HepG2 (cell line): ENCODE measurements at regions of chr7 and their contacts with region 1.

Region 1: DNA sequence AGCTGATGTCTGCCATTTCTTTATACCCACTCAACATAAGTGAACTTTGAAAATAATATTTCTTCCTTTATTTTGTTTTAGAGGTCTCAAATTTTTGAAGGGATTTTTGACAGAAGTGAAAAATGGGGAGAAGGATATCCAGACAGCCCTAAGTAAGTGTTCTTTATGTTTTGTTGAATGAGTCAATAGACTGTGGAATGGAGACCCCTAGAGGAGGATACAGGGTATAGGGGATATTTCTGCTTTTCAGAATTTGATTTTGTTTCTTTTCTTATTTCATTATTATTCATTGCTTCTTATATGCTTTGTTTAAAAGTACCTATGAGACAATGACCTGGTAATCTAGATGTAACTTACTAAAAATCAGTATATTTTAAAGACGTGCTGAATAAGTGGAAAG is 34.4 kb downstream of the PLEKHA8 start:
- DNase-seq: peak; percentile 44
- ATAC-seq: peak; percentile 61
- H3K4me3 ChIP-seq: no peak overlapping the region
- H3K27ac ChIP-seq: no peak overlapping the region
- H3K4me1 ChIP-seq: no peaks in the 10 kb centered on the region
- H3K27me3 ChIP-seq: no peaks in the 10 kb centered on the region
- CTCF ChIP-seq: peak; percentile 56
- EP300 ChIP-seq: no peak
- POLR2A ChIP-seq: no peak
- RAD21 ChIP-seq: no peak

Region 2: DNA sequence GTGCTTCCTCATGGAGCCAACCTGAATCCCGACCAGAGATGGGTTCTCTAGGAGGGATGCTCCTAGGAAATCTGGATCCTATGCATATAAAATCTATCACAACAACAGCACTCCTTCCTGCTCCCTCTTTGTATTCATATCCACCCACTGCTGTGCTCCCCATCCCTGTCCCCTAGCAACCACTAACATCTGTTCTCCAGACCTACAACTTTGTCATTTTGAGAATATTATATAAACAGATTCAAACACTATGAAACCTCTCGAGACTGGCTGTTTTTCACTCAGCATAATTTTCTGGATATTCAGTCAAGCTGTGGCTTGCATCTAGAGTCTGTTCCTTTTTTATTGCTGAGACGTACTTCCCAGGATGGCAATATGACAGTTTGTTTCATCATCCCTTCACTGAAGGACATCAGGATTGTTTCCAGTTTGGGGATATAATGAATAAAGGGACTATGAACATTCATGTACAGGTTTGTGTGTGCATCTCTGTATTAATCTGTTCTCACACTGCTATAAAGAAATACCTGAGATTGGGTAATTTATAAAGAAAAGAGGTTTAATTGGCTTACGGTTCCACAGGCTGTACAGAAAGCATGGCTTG is 535.0 kb before region 1 on chr7:
- CTCF ChIA-PET with region 1: no interaction called
- POLR2A ChIA-PET with region 1: no interaction called
- in situ Hi-C with region 1: no loop called
- intact Hi-C with region 1: no loop called
- DNase-seq: no peak
- ATAC-seq: no peak
- H3K4me3 ChIP-seq: no peak overlapping the region
- H3K27ac ChIP-seq: no peak overlapping the region
- H3K4me1 ChIP-seq: peaks cover 12% of the 10 kb centered on the region
- H3K27me3 ChIP-seq: no peaks in the 10 kb centered on the region
- CTCF ChIP-seq: no peak
- EP300 ChIP-seq: no peak
- POLR2A ChIP-seq: no peak
- RAD21 ChIP-seq: no peak

Region 3: DNA sequence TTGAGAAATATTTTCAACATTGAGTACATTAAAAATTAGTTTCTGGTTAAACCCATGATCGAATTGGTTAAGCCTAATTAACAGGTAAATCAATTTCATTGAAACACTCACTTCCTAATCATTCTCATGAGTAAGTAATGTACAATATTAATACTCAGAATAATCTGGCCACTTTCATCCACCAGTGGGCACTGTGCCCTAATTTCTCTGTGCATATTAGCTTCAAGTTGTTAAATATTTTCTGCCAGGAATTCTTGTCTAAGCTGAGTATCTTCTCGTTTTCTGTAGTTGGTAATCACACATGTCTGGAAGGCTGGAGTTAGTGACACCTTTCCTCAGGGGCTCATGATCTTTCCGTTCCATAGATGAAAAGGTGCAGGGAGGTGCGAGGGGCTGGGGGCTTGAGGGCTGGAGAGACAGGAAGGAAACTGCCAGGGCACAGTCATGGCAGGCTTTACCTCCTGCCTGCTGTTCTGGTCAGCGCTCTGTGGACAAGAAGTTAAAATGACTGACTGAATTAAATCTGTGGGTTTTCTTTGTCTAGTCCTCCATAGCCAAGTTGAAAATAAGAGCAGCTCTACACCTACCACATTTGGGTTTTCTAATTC is 184.4 kb before region 1 on chr7:
- CTCF ChIA-PET with region 1: interaction called, 8 read pairs
- POLR2A ChIA-PET with region 1: no interaction called
- in situ Hi-C with region 1: loop called (anchors 10 kb)
- intact Hi-C with region 1: loop called (anchors 2 kb)
- DNase-seq: peak; percentile 20
- ATAC-seq: peak; percentile 57; the same call in 2 of the 3 replicates
- H3K4me3 ChIP-seq: no peak overlapping the region
- H3K27ac ChIP-seq: no peak overlapping the region
- H3K4me1 ChIP-seq: peaks cover 8% of the 10 kb centered on the region; the same call in 1 of the 2 replicates
- H3K27me3 ChIP-seq: peaks cover 0 to 9% of the 10 kb centered on the region in 2 experiments; a peak in 3 of 5 replicates
- CTCF ChIP-seq: peak; percentile 39
- EP300 ChIP-seq: no peak
- POLR2A ChIP-seq: no peak
- RAD21 ChIP-seq: no peak

Region 4: GRCh38 chr7:29946428-29947186 is 116.0 kb before region 1 on chr7:
- CTCF ChIA-PET with region 1: no interaction called
- POLR2A ChIA-PET with region 1: no interaction called
- in situ Hi-C with region 1: no loop called
- intact Hi-C with region 1: loop called (anchors 1 kb)
- DNase-seq: peak; percentile 19
- ATAC-seq: peak; percentile 76
- H3K4me3 ChIP-seq: no peak overlapping the region
- H3K27ac ChIP-seq: no peak overlapping the region
- H3K4me1 ChIP-seq: no peaks in the 10 kb centered on the region
- H3K27me3 ChIP-seq: no peaks in the 10 kb centered on the region
- CTCF ChIP-seq: peak; percentile 52
- EP300 ChIP-seq: no peak
- POLR2A ChIP-seq: no peak
- RAD21 ChIP-seq: no peak

Region 5: DNA sequence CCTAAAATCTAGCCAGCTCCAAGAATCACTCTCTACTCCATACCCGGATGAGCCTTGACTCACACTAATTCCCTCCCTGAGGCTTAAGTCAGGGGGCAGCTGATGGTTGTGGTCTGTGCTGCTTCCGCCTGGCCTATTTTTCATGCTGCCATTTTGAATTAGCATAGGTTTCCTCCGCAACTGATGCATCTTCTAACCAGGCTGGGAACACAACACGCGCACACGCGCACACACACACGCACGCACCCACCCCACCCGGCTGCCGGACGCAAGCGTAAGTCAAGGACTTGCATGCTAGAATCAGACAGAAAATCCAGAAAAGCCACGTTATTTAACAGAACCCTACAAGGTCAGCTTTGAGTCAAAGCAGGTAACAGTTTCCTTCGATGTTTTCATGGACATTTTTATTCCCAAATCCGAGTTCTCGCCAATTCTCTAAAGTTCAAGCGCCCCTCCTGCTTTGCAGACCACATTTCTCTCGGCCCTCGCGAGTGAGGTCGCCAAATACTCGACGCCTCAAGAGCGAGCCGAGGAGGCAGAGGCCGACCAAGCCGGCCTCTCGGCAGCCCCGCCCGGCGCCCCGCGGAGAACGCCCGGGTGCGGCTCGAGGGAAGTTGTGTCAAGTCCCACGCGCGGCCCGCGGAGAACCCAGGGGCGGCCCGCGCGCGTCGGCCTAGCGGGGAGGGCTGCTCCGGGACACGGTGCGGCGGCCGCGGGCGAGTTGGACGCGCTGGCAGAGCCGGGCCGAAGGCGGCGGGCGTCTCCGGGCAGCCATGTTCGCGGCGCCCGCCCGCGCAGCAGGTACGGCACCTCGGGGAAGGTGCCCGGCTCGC is 74.0 kb before region 1 on chr7:
- CTCF ChIA-PET with region 1: no interaction called
- POLR2A ChIA-PET with region 1: interaction called, 3 read pairs
- in situ Hi-C with region 1: no loop called
- intact Hi-C with region 1: loop called (anchors 2 kb)
- DNase-seq: peak; percentile 57
- ATAC-seq: peak; percentile 57
- H3K4me3 ChIP-seq: peak overlapping the region; percentile 96 to 99 (median 97)
- H3K27ac ChIP-seq: peak overlapping the region; percentile 86
- H3K4me1 ChIP-seq: peaks cover 37% of the 10 kb centered on the region
- H3K27me3 ChIP-seq: no peaks in the 10 kb centered on the region
- CTCF ChIP-seq: no peak
- EP300 ChIP-seq: no peak
- POLR2A ChIP-seq: peak in 1 of 2 experiments; percentile 54; a peak in 3 of 4 replicates
- RAD21 ChIP-seq: no peak

Region 6: GRCh38 chr7:30026229-30027064 is 36.1 kb before region 1 on chr7 and contains the start of gene FKBP14:
- CTCF ChIA-PET with region 1: no interaction called
- POLR2A ChIA-PET with region 1: no interaction called
- in situ Hi-C with region 1: no loop called
- intact Hi-C with region 1: loop called (anchors 2 kb)
- DNase-seq: peak; percentile 98
- ATAC-seq: peak; percentile 89
- H3K4me3 ChIP-seq: peak within 1 kb of the TSS; percentile 82 to 96 (median 95)
- H3K27ac ChIP-seq: peak within 1 kb of the TSS; percentile 89
- H3K4me1 ChIP-seq: peaks cover 52% of the 10 kb centered on the region
- H3K27me3 ChIP-seq: no peaks in the 10 kb centered on the region; a peak in 1 of 5 replicates
- CTCF ChIP-seq: no peak
- EP300 ChIP-seq: no peak; a peak in 1 of 4 replicates
- POLR2A ChIP-seq: peak; percentile 69 to 79
- RAD21 ChIP-seq: no peak
- total RNA-seq, gene FKBP14: 20.2 and 32.3 TPM in 2 replicates